ENCODE measurements at regions of chr9 and their contacts with region 1.

Region 1: GRCh38 chr9:93064392-93065134 is 6.1 kb downstream of the SUSD3 start:
- DNase-seq: peak; percentile 81 to 96 (median 90)
- H3K4me3 ChIP-seq: peak overlapping the region; percentile 72
- H3K4me3 Mint-ChIP-seq: peak overlapping the region; percentile 80 to 92 (median 82)
- H3K27ac ChIP-seq: peak overlapping the region; percentile 59
- H3K27ac Mint-ChIP-seq: peak overlapping the region; percentile 94 to 99 (median 98)
- H3K4me1 ChIP-seq: peaks cover 87% of the 10 kb centered on the region
- H3K4me1 Mint-ChIP-seq: peaks cover 74 to 98% (median 97%) of the 10 kb centered on the region in 3 donors
- H3K27me3 ChIP-seq: no peaks in the 10 kb centered on the region
- H3K27me3 Mint-ChIP-seq: peaks cover 0 to 2% of the 10 kb centered on the region in 2 donors

Region 2: GRCh38 chr9:92963831-92964626 is 100.5 kb before region 1 on chr9:
- CTCF ChIA-PET with region 1: interaction called, 9 read pairs
- POLR2A ChIA-PET with region 1: interaction called, 16 read pairs
- DNase-seq: peak; percentile 64 to 93 (median 89)
- H3K4me3 ChIP-seq: peak overlapping the region; percentile 73
- H3K4me3 Mint-ChIP-seq: peak overlapping the region; percentile 91 to 95 (median 93)
- H3K27ac ChIP-seq: peak overlapping the region; percentile 90
- H3K27ac Mint-ChIP-seq: peak overlapping the region; percentile 92 to 99 (median 98)
- H3K4me1 ChIP-seq: peaks cover 71% of the 10 kb centered on the region
- H3K4me1 Mint-ChIP-seq: peaks cover 61 to 69% (median 67%) of the 10 kb centered on the region in 3 donors
- H3K27me3 ChIP-seq: no peaks in the 10 kb centered on the region
- H3K27me3 Mint-ChIP-seq: peaks cover 0 to 1% of the 10 kb centered on the region in 2 donors

Region 3: GRCh38 chr9:93028448-93029006 is 36.0 kb before region 1 on chr9:
- CTCF ChIA-PET with region 1: interaction called, 10 read pairs
- POLR2A ChIA-PET with region 1: interaction called, 32 read pairs
- DNase-seq: peak; percentile 51 to 89 (median 83)
- H3K4me3 ChIP-seq: peak overlapping the region; percentile 60
- H3K4me3 Mint-ChIP-seq: peak overlapping the region; percentile 52 to 90 (median 80)
- H3K27ac ChIP-seq: peak overlapping the region; percentile 60
- H3K27ac Mint-ChIP-seq: peak overlapping the region; percentile 92 to 98 (median 95)
- H3K4me1 ChIP-seq: peaks cover 91% of the 10 kb centered on the region
- H3K4me1 Mint-ChIP-seq: peaks cover 64 to 87% (median 80%) of the 10 kb centered on the region in 3 donors
- H3K27me3 ChIP-seq: no peaks in the 10 kb centered on the region
- H3K27me3 Mint-ChIP-seq: no peaks in the 10 kb centered on the region

Region 4: DNA sequence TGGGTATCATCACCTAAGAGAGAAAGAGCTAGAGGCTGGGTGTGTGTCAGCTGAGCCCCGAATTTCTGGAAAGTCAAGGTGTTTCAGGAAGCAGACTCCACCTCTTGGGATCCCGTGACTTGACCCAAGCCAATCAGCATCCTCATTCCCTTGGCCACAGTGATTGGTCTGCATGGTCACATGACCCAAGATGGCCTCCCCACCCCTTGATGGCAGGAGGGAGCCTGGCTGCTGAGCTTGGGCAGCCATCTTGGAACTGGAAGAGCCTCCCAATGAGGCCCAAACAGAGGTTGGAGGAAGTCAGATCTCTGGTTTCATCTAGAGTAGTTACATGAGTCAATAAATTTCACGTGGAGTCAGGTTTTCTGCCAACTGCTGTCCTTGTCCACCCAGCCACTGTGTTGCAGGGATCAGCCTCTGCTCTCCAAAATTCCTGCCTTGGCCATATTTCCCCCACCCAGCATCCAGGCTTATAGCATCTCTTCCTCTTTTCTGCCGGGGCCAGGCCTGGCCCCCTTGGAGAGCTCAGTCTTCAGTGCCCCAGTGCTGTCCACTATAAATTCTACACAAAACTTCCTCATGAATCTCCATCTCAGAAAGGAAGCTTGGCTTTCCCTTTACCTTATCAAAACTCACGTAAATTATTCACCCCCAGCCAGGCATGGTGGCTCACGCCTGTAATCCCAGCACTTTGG is 23.3 kb before region 1 on chr9:
- CTCF ChIA-PET with region 1: interaction called, 5 read pairs
- POLR2A ChIA-PET with region 1: interaction called, 12 read pairs
- DNase-seq: no peak
- H3K4me3 ChIP-seq: no peak overlapping the region
- H3K4me3 Mint-ChIP-seq: peak overlapping the region in 1 of 7 donors; percentile 5
- H3K27ac ChIP-seq: no peak overlapping the region
- H3K27ac Mint-ChIP-seq: peak overlapping the region in 5 of 8 donors; percentile 60 to 87 (median 79)
- H3K4me1 ChIP-seq: peaks cover 40% of the 10 kb centered on the region
- H3K4me1 Mint-ChIP-seq: peaks cover 33 to 69% (median 38%) of the 10 kb centered on the region in 3 donors
- H3K27me3 ChIP-seq: no peaks in the 10 kb centered on the region
- H3K27me3 Mint-ChIP-seq: peaks cover 0 to 6% of the 10 kb centered on the region in 2 donors

Region 5: GRCh38 chr9:93051680-93052089 is 12.9 kb before region 1 on chr9:
- CTCF ChIA-PET with region 1: interaction called, 23 read pairs
- POLR2A ChIA-PET with region 1: interaction called, 19 read pairs
- DNase-seq: no peak
- H3K4me3 ChIP-seq: no peak overlapping the region
- H3K4me3 Mint-ChIP-seq: no peak overlapping the region
- H3K27ac ChIP-seq: no peak overlapping the region
- H3K27ac Mint-ChIP-seq: peak overlapping the region in 4 of 8 donors; percentile 21 to 84 (median 61)
- H3K4me1 ChIP-seq: no peaks in the 10 kb centered on the region
- H3K4me1 Mint-ChIP-seq: peaks cover 27 to 46% (median 30%) of the 10 kb centered on the region in 3 donors
- H3K27me3 ChIP-seq: no peaks in the 10 kb centered on the region
- H3K27me3 Mint-ChIP-seq: peaks cover 0 to 2% of the 10 kb centered on the region in 2 donors

Region 6: GRCh38 chr9:93095205-93096130 is 30.9 kb after region 1 on chr9:
- CTCF ChIA-PET with region 1: interaction called, 6 read pairs
- POLR2A ChIA-PET with region 1: interaction called, 17 read pairs
- DNase-seq: peak; percentile 100
- H3K4me3 ChIP-seq: peak overlapping the region; percentile 76
- H3K4me3 Mint-ChIP-seq: peak overlapping the region; percentile 81 to 90 (median 85)
- H3K27ac ChIP-seq: peak overlapping the region; percentile 91
- H3K27ac Mint-ChIP-seq: peak overlapping the region; percentile 94 to 99 (median 96)
- H3K4me1 ChIP-seq: peaks cover 61% of the 10 kb centered on the region
- H3K4me1 Mint-ChIP-seq: peaks cover 59 to 82% (median 63%) of the 10 kb centered on the region in 3 donors
- H3K27me3 ChIP-seq: no peaks in the 10 kb centered on the region
- H3K27me3 Mint-ChIP-seq: no peaks in the 10 kb centered on the region

Region 7: DNA sequence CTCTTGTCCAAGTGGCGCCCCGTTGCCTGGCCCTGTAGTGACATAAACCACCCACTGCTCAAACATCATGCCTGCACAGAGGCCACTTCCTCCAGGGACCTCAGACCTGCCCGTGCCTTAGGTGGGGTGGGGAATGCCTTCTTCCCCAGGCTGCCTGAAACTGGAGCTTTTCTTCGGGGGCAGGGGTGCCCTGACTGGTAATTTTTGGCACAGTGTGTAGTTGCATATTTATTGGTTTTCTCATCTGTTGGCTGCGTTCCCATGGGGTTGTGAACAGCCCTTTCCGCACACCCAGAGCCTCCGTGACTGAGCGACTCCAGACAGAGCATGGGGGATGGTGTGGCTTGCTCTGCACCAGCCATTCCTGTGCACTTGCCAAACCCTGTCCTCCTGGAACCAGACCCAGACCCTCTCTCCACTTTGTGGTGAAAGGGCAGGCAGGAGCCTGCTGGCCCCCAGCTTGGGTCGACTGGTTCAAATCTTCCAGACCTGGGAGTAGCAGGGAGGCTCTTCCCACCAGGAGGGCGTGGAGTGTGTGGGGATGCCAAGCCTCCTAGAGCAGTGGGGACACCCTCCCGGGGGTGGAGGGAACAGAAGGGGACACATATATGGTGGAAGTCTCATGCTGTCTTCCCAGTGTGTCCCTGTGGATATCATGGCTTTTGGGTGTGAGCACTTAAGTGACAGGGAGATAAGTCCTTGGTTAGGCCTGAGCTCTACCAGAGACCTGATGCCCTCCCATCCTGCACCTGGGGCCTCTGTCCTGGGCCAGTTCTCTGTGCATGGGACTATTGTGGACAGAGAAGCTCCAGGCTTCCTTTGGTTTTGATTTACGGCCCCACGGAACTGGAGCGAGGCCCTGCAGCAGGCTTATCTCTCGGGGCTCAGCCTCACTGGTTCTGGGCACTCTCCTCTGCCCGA is 159.0 kb after region 1 on chr9:
- CTCF ChIA-PET with region 1: no interaction called
- POLR2A ChIA-PET with region 1: no interaction called
- DNase-seq: no peak
- H3K4me3 ChIP-seq: no peak overlapping the region
- H3K4me3 Mint-ChIP-seq: no peak overlapping the region
- H3K27ac ChIP-seq: no peak overlapping the region
- H3K27ac Mint-ChIP-seq: no peak overlapping the region
- H3K4me1 ChIP-seq: no peaks in the 10 kb centered on the region
- H3K4me1 Mint-ChIP-seq: no peaks in the 10 kb centered on the region
- H3K27me3 ChIP-seq: no peaks in the 10 kb centered on the region
- H3K27me3 Mint-ChIP-seq: peaks cover 9 to 15% of the 10 kb centered on the region in 2 donors

Measured in CD8-positive, alpha-beta memory T cell (primary cell).